Ovary (tissue), 10 donors: ENCODE measurements at regions of chr6 and their contacts with region 1.

Region 1: DNA sequence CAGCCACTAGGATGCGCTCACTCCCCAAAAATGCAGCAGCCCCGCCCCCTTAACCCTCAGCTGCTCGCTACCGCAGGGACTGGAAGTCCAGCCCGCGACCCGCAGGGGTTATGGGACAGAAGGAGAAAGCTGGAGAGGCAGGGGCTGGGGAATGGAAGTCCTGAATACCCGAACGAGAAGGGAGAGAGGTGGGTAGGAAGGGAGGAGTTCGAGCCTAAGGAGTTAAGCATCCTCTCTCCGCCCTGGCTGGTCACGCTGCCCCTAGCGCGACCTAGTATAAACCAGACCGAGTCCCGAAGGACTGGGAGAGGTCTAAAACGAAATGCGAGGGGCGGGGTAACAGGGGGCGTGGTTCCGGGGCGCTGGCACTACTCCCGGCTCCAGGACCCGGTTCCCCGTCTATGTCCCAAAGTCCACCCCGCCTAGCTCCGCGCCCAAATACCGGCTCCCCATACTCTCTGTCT is 448 bp upstream of the DDAH2 start:
- DNase-seq: peak; percentile 92 to 96 (median 95)
- H3K4me3 ChIP-seq: peak overlapping the region; percentile 97
- H3K27ac ChIP-seq: peak overlapping the region; percentile 93 to 97
- H3K4me1 ChIP-seq: peaks cover 7% of the 10 kb centered on the region
- H3K27me3 ChIP-seq: no peaks in the 10 kb centered on the region
- CTCF ChIP-seq: peak in 1 of 3 donors; percentile 23
- EP300 ChIP-seq: no peak
- POLR2A ChIP-seq: no peak

Region 2: DNA sequence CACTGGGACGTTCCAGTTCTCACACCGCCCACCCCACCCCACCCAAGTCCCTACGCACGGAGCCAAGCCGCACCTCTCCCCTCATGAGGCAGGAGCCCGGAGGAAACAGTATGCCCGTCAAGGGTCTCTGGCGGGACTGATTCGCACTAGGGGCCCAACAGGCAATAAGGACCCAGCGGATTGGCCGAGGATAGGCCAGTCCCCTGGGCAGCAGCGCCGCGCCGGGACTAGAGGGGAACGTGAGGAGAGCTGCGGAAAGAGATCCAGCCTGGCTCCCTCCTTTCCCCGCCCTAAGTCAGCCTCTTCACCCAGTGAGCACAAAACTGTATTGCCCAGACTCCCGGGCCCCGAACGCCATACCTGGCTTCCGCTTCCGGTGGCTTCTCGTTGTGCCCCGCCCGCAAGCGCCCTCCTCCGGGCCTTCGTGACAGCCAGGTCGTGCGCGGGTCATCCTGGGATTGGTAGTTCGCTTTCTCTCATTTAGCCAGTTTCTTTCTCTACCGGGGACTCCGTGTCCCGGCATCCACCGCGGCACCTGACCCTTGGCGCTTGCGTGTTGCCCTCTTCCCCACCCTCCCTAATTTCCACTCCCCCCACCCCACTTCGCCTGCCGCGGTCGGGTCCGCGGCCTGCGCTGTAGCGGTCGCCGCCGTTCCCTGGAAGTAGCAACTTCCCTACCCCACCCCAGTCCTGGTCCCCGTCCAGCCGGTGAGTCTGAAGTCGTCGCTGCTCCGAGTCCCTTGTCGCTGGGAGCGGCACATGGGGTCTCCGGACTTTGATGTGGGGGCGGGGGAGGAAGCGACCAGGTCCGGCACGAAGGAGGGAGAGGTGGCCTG is 63.8 kb before region 1 on chr6 and contains the start of gene CSNK2B:
- intact Hi-C with region 1: loop called in 1 of 4 experiments (anchors 5 kb)
- DNase-seq: peak; percentile 97 to 99 (median 98)
- H3K4me3 ChIP-seq: peak within 1 kb of the TSS; percentile 78
- H3K27ac ChIP-seq: peak within 1 kb of the TSS; percentile 85 to 90
- H3K4me1 ChIP-seq: peaks cover 17% of the 10 kb centered on the region
- H3K27me3 ChIP-seq: no peaks in the 10 kb centered on the region
- CTCF ChIP-seq: peak in 1 of 3 donors; percentile 24
- EP300 ChIP-seq: peak; percentile 62
- POLR2A ChIP-seq: peak; percentile 84
- total RNA-seq, gene CSNK2B: 120 to 258 (median 139) TPM

Region 3: GRCh38 chr6:31702819-31703522 is 26.6 kb before region 1 on chr6 and contains the start of gene ABHD16A:
- intact Hi-C with region 1: loop called in 1 of 4 experiments (anchors 2 kb)
- DNase-seq: peak; percentile 98 to 99 (median 99)
- H3K4me3 ChIP-seq: peak within 1 kb of the TSS; percentile 58
- H3K27ac ChIP-seq: peak within 1 kb of the TSS; percentile 87 to 99
- H3K4me1 ChIP-seq: peaks cover 11% of the 10 kb centered on the region
- H3K27me3 ChIP-seq: no peaks in the 10 kb centered on the region
- CTCF ChIP-seq: peak in 2 of 3 donors; percentile 19 to 35
- EP300 ChIP-seq: no peak
- POLR2A ChIP-seq: peak; percentile 98
- total RNA-seq, gene ABHD16A: 31.1 to 60.4 (median 37.6) TPM

Region 4: GRCh38 chr6:31827286-31828079 is 97.9 kb after region 1 on chr6 and contains the start of gene HSPA1B:
- intact Hi-C with region 1: loop called in 3 of 4 experiments (anchors 2 to 10 kb)
- DNase-seq: peak; percentile 99 to 100 (median 100)
- H3K4me3 ChIP-seq: peak within 1 kb of the TSS; percentile 66
- H3K27ac ChIP-seq: peak within 1 kb of the TSS; percentile 96 to 98
- H3K4me1 ChIP-seq: peaks cover 10% of the 10 kb centered on the region
- H3K27me3 ChIP-seq: no peaks in the 10 kb centered on the region
- CTCF ChIP-seq: peak in 1 of 3 donors; percentile 46
- EP300 ChIP-seq: peak; percentile 96
- POLR2A ChIP-seq: peak; percentile 100
- total RNA-seq, gene HSPA1B: 119 to 506 (median 196) TPM

Region 5: GRCh38 chr6:32188381-32189004 is 458.9 kb after region 1 on chr6:
- intact Hi-C with region 1: loop called in 1 of 4 experiments (anchors 10 kb)
- DNase-seq: peak in 4 of 5 donors; percentile 28 to 73 (median 44)
- H3K4me3 ChIP-seq: peak overlapping the region; percentile 55
- H3K27ac ChIP-seq: peak overlapping the region; percentile 93 to 95
- H3K4me1 ChIP-seq: peaks cover 5% of the 10 kb centered on the region
- H3K27me3 ChIP-seq: no peaks in the 10 kb centered on the region
- CTCF ChIP-seq: no peak
- EP300 ChIP-seq: no peak
- POLR2A ChIP-seq: no peak